Panc1 (cell line): ENCODE measurements at regions of chr19 and their contacts with region 1.

Region 1: GRCh38 chr19:923280-924176 is 2.3 kb upstream of the ARID3A start:
- DNase-seq: no peak
- ATAC-seq: no peak
- H3K4me3 ChIP-seq: no peak overlapping the region
- H3K27ac ChIP-seq: no peak overlapping the region
- H3K4me1 ChIP-seq: no peaks in the 10 kb centered on the region; the same call in 1 of the 2 replicates
- H3K27me3 ChIP-seq: no peaks in the 10 kb centered on the region
- CTCF ChIP-seq: no peak

Region 2: GRCh38 chr19:984165-984967 is 60.8 kb after region 1 on chr19 and contains the start of gene WDR18:
- CTCF ChIA-PET with region 1: interaction called, 14 read pairs
- POLR2A ChIA-PET with region 1: interaction called, 3 read pairs
- in situ Hi-C with region 1: no loop called
- intact Hi-C with region 1: loop called (anchors 2 kb)
- DNase-seq: peak; percentile 32
- ATAC-seq: peak; percentile 89
- H3K4me3 ChIP-seq: peak within 1 kb of the TSS; percentile 65 to 88
- H3K27ac ChIP-seq: peak within 1 kb of the TSS; percentile 83
- H3K4me1 ChIP-seq: peaks cover 11% of the 10 kb centered on the region
- H3K27me3 ChIP-seq: no peaks in the 10 kb centered on the region
- CTCF ChIP-seq: no peak
- total RNA-seq, gene WDR18: 44.0 TPM

Region 3: GRCh38 chr19:1020868-1021425 is 97.4 kb after region 1 on chr19 and contains the start of gene TMEM259:
- CTCF ChIA-PET with region 1: no interaction called
- POLR2A ChIA-PET with region 1: no interaction called
- in situ Hi-C with region 1: no loop called
- intact Hi-C with region 1: no loop called
- DNase-seq: peak; percentile 86
- ATAC-seq: peak; percentile 87
- H3K4me3 ChIP-seq: peak within 1 kb of the TSS; percentile 55 to 75
- H3K27ac ChIP-seq: peak within 1 kb of the TSS; percentile 88
- H3K4me1 ChIP-seq: peaks cover 20% of the 10 kb centered on the region
- H3K27me3 ChIP-seq: no peaks in the 10 kb centered on the region
- CTCF ChIP-seq: no peak
- total RNA-seq, gene TMEM259: 193 TPM

Region 4: DNA sequence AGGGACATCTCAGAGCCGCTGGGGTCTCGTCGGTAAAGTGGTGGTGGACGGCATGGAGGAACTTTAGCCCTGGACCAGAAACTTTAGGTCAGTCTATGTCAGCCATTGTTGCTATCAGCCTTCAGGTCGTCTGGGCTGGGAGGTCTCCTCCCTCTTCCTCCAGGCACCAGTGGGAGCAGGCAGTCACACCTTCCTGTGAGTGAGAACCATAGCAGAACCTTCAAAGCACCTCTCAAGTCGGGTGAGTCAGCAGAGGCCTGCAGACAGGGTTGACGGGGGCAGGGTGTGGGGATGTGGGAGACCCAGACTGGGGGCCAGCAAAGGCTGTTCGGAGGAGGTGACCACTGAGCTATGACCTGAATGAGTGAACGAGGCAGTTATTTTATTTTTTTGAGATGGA is 265.9 kb after region 1 on chr19:
- CTCF ChIA-PET with region 1: no interaction called
- POLR2A ChIA-PET with region 1: no interaction called
- in situ Hi-C with region 1: no loop called
- intact Hi-C with region 1: no loop called
- DNase-seq: no peak
- ATAC-seq: peak; percentile 48; the same call in 1 of the 2 replicates
- H3K4me3 ChIP-seq: no peak overlapping the region
- H3K27ac ChIP-seq: peak overlapping the region; percentile 69
- H3K4me1 ChIP-seq: peaks cover 7% of the 10 kb centered on the region
- H3K27me3 ChIP-seq: no peaks in the 10 kb centered on the region
- CTCF ChIP-seq: no peak